RWPE1 (cell line): ENCODE measurements at regions of chr7 and their contacts with region 1.

Region 1: GRCh38 chr7:1537535-1538412 is 7.3 kb downstream of the MAFK start:
- DNase-seq: peak; percentile 55
- H3K27ac ChIP-seq: peak overlapping the region; percentile 99
- CTCF ChIP-seq: no peak

Region 2: GRCh38 chr7:1555809-1556540 is 18.2 kb after region 1 on chr7 and contains the start of gene TMEM184A:
- CTCF ChIA-PET with region 1: interaction called, 11 read pairs
- POLR2A ChIA-PET with region 1: interaction called, 5 read pairs
- DNase-seq: peak; percentile 86
- H3K27ac ChIP-seq: peak within 1 kb of the TSS; percentile 96
- CTCF ChIP-seq: peak; percentile 89